ENCODE measurements at regions of chr6 and their contacts with region 1.

Region 1: DNA sequence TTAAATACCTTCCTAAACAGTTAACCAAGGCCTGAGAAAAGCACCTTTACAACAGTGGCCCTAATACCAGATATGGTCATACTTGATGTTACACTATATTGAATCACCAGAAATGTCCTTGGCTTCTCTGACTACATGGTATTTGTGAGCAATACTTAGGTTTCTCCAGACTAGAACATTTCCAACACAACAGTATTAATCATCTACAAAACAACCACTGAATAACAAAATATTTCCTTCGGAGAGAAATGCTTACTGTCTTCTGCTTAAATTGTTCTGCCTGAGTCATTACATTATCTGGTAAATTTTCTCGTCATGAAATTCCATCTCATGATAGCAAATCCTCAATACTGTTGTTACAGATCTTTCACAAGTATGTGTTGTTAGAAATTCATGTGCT is 252.9 kb upstream of the RUNX2 start:
- DNase-seq: no peak
- ATAC-seq: no peak
- H3K4me3 ChIP-seq: no peak overlapping the region
- H3K27ac ChIP-seq: no peak overlapping the region
- H3K4me1 ChIP-seq: no peaks in the 10 kb centered on the region
- H3K27me3 ChIP-seq: no peaks in the 10 kb centered on the region
- CTCF ChIP-seq: no peak
- EP300 ChIP-seq: no peak
- POLR2A ChIP-seq: no peak
- RAD21 ChIP-seq: no peak

Region 2: GRCh38 chr6:44855562-44856411 is 219.5 kb before region 1 on chr6:
- CTCF ChIA-PET with region 1: no interaction called
- POLR2A ChIA-PET with region 1: no interaction called
- RAD21 ChIA-PET with region 1: no interaction called
- SMC1A ChIA-PET with region 1: no interaction called
- in situ Hi-C with region 1: no loop called
- intact Hi-C with region 1: no loop called
- DNase-seq: no peak
- ATAC-seq: no peak
- H3K4me3 ChIP-seq: no peak overlapping the region
- H3K27ac ChIP-seq: no peak overlapping the region
- H3K4me1 ChIP-seq: no peaks in the 10 kb centered on the region
- H3K27me3 ChIP-seq: no peaks in the 10 kb centered on the region
- CTCF ChIP-seq: no peak
- EP300 ChIP-seq: no peak
- POLR2A ChIP-seq: no peak
- RAD21 ChIP-seq: no peak

Region 3: GRCh38 chr6:45057711-45058110 is 17.5 kb before region 1 on chr6:
- CTCF ChIA-PET with region 1: no interaction called
- POLR2A ChIA-PET with region 1: no interaction called
- RAD21 ChIA-PET with region 1: no interaction called
- SMC1A ChIA-PET with region 1: no interaction called
- in situ Hi-C with region 1: no loop called
- intact Hi-C with region 1: loop called (anchors 2 kb)
- DNase-seq: no peak
- ATAC-seq: no peak
- H3K4me3 ChIP-seq: no peak overlapping the region
- H3K27ac ChIP-seq: no peak overlapping the region
- H3K4me1 ChIP-seq: no peaks in the 10 kb centered on the region
- H3K27me3 ChIP-seq: no peaks in the 10 kb centered on the region
- CTCF ChIP-seq: no peak
- EP300 ChIP-seq: no peak
- POLR2A ChIP-seq: no peak
- RAD21 ChIP-seq: no peak